WTC11 (cell line): ENCODE measurements at regions of chr11 and their contacts with region 1.

Region 1: DNA sequence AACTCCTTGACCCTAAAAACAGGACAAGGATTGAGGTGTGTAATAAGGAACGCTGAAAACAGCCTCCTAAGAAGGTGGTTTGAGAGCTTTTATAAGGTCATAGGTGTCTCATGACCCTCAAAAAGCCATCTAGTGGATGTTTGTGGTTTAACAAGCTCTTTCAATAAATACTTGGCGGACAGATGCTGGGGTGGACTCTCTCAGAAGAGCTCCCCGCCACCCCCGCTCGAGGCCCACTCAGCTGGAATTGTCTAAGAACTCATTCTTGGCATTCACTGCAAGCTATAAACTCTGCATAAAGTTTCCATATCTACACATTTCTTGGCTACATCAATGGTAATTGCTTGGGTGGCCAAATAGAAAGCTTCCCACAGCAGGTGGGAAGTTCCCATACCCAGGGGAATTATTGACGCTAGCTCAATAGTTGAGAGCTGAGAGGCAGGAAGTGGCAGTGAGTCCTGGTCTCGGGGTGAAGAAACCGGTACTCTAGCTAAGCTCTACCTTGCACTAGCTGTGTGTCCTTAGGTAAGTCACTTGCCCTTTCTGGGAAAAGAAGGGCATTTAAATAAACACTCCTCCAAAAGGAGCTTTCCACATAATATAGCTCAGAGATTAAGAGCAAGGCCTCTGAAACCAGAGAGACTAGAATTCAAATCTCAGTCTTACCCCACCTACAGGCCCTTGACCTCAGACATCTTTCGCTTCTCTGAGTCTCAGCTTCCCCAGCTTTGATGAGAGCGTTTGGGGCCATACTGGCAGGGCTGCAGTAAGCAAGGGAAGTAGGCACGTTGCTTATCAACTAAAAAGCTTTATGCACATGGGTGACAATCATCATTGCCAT is 6.4 kb downstream of the MS4A15 start:
- DNase-seq: no peak
- ATAC-seq: peak; percentile 60
- H3K4me3 Mint-ChIP-seq: no peak overlapping the region
- H3K27ac Mint-ChIP-seq: no peak overlapping the region
- H3K4me1 Mint-ChIP-seq: peaks cover 21% of the 10 kb centered on the region
- H3K27me3 Mint-ChIP-seq: peaks cover 18% of the 10 kb centered on the region
- CTCF ChIP-seq: peak; percentile 54; the same call in 1 of the 2 replicates

Region 2: DNA sequence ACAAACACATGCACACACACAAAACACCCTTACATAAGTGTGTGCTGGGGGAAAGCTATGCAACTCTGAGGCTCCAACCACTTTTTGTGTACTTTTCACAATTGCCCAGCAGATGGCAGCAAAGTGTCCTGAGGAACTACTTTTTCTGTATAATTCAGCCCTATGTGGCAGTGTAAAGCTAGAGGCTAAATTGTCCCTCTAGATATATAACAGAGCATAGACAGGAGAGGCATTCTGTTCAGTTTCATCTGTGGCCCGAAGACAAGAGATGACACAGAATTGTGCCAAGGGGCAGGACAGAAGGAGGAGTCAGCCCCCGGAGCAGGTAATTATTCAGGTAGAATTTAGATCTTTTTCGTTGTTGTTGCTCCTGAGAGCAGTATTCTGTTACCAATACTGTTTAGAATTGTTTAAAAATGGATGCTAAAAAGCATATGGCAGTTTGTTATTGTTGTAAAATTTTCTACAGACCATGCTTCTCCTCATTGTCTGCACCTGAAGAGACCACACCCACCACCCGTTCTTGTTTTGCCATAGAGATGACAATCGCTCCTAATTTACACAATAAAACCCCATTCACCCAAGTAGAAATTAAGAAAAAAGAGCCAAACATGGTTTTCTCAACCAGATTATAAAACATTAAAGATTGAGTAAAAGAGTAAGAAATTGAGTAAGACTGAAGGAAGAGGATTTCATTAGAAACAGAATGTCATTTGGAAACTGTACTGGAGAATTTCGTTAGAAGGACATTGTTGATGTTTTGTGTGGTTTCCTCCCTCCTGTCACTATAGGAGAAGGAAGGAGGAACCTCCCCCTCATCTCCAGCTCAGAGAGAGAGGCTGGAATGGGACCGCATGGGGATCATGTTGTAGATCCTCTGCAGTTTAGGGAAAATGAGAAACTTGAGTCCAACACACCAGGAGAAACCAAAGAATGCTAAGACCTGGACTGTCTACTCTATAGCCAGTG is 399.2 kb before region 1 on chr11:
- CTCF ChIA-PET with region 1: interaction called, 13 read pairs
- POLR2A ChIA-PET with region 1: no interaction called
- DNase-seq: peak; percentile 65
- ATAC-seq: peak; percentile 74
- H3K4me3 Mint-ChIP-seq: peak overlapping the region; percentile 46
- H3K27ac Mint-ChIP-seq: peak overlapping the region; percentile 75
- H3K4me1 Mint-ChIP-seq: peaks cover 57% of the 10 kb centered on the region
- H3K27me3 Mint-ChIP-seq: peaks cover 4% of the 10 kb centered on the region; the same call in 1 of the 2 replicates
- CTCF ChIP-seq: peak; percentile 72

Region 3: GRCh38 chr11:60504219-60504905 is 258.7 kb before region 1 on chr11:
- CTCF ChIA-PET with region 1: no interaction called
- POLR2A ChIA-PET with region 1: no interaction called
- DNase-seq: no peak
- ATAC-seq: no peak
- H3K4me3 Mint-ChIP-seq: no peak overlapping the region
- H3K27ac Mint-ChIP-seq: no peak overlapping the region
- H3K4me1 Mint-ChIP-seq: peaks cover 34% of the 10 kb centered on the region
- H3K27me3 Mint-ChIP-seq: no peaks in the 10 kb centered on the region
- CTCF ChIP-seq: no peak

Region 4: GRCh38 chr11:60625262-60625661 is 137.8 kb before region 1 on chr11:
- CTCF ChIA-PET with region 1: no interaction called
- POLR2A ChIA-PET with region 1: no interaction called
- DNase-seq: peak; percentile 50
- ATAC-seq: peak; percentile 74
- H3K4me3 Mint-ChIP-seq: no peak overlapping the region
- H3K27ac Mint-ChIP-seq: no peak overlapping the region
- H3K4me1 Mint-ChIP-seq: peaks cover 4% of the 10 kb centered on the region
- H3K27me3 Mint-ChIP-seq: no peaks in the 10 kb centered on the region
- CTCF ChIP-seq: no peak

Region 5: GRCh38 chr11:60657888-60658287 is 105.2 kb before region 1 on chr11:
- CTCF ChIA-PET with region 1: interaction called, 20 read pairs
- POLR2A ChIA-PET with region 1: no interaction called
- DNase-seq: no peak
- ATAC-seq: peak; percentile 83
- H3K4me3 Mint-ChIP-seq: no peak overlapping the region
- H3K27ac Mint-ChIP-seq: no peak overlapping the region
- H3K4me1 Mint-ChIP-seq: 0 out of 2 replicates have a peak, but pooled peaks cover 2% of the 10 kb centered on the region
- H3K27me3 Mint-ChIP-seq: no peaks in the 10 kb centered on the region
- CTCF ChIP-seq: no peak

Region 6: GRCh38 chr11:60710482-60710881 is 52.6 kb before region 1 on chr11:
- CTCF ChIA-PET with region 1: interaction called, 16 read pairs
- POLR2A ChIA-PET with region 1: no interaction called
- DNase-seq: peak; percentile 25
- ATAC-seq: peak; percentile 90
- H3K4me3 Mint-ChIP-seq: no peak overlapping the region
- H3K27ac Mint-ChIP-seq: no peak overlapping the region
- H3K4me1 Mint-ChIP-seq: 0 out of 2 replicates have a peak, but pooled peaks cover 3% of the 10 kb centered on the region
- H3K27me3 Mint-ChIP-seq: no peaks in the 10 kb centered on the region; the same call in 1 of the 2 replicates
- CTCF ChIP-seq: no peak

Region 7: GRCh38 chr11:60750926-60751325 is 12.1 kb before region 1 on chr11:
- CTCF ChIA-PET with region 1: interaction called, 20 read pairs
- POLR2A ChIA-PET with region 1: no interaction called
- DNase-seq: no peak
- ATAC-seq: no peak
- H3K4me3 Mint-ChIP-seq: no peak overlapping the region
- H3K27ac Mint-ChIP-seq: no peak overlapping the region
- H3K4me1 Mint-ChIP-seq: no peaks in the 10 kb centered on the region; the same call in 1 of the 2 replicates
- H3K27me3 Mint-ChIP-seq: peaks cover 3% of the 10 kb centered on the region; the same call in 1 of the 2 replicates
- CTCF ChIP-seq: no peak

Region 8: DNA sequence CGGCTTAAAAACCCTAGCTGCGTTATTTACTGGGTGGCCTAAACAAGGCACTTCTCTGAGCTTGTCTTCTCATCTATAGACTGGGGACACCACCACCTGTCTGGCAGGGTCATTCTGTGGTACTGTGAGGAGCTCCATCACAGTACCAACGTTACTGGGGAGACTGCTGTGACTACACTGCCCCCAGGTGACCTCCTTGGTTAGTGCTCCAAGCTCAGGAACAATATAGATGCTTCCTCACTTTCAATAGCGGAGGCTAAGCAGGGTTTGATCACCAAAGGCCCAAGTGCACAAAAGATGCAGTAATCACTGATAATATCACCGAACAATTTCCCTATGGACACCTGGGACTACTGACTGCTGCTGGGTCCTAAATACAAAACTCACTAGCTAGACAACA is 124.5 kb after region 1 on chr11:
- CTCF ChIA-PET with region 1: interaction called, 26 read pairs
- POLR2A ChIA-PET with region 1: no interaction called
- DNase-seq: peak; percentile 60
- ATAC-seq: peak; percentile 99
- H3K4me3 Mint-ChIP-seq: no peak overlapping the region
- H3K27ac Mint-ChIP-seq: no peak overlapping the region
- H3K4me1 Mint-ChIP-seq: no peaks in the 10 kb centered on the region
- H3K27me3 Mint-ChIP-seq: no peaks in the 10 kb centered on the region
- CTCF ChIP-seq: peak; percentile 35; the same call in 1 of the 2 replicates